Psoas muscle (tissue), 8 donors: ENCODE measurements at regions of chr15 and their contacts with region 1.

Region 1: DNA sequence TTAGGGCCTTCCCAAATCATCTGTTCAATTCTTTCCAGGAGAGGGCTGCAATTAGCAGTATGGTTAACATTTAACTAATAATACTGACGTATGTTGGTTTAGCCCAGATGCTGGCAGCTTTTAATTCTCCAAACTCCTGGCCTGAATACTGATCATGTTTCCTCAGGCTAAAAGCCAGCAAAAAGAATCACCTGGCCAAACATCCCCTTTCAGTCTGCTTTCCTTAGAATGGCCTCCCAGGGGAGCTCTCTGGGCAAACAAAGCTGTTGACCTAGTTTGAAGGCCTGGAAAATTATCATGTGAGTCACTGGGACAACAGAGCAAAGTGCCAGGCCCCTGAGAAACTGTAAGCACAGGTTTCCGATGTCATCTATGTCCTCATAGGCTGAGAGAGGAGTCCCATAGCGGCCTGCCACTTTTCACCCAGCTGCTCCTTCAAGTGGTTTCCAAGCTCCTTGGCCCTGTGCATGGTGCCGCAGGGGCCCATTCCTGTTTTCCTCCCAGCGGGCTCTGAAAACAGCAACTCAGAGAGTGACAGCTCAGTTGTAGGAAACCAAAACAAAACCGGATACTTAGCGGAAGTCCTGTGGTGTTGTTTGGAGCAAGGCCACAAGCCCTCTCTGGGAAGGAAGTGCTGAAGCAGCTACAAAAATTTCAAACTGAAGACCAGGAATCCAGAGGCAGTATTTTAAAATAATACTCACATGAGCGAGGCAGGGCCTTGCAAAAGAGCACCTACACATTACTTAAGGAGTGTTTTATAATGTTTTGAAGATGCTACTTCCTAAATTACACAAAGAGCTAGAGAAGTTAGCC is 36.5 kb upstream of the RAB11A start:
- DNase-seq: peak; percentile 85 to 95
- ATAC-seq: peak; percentile 95 to 98 (median 97)
- H3K4me3 ChIP-seq: peak overlapping the region; percentile 35
- H3K27ac ChIP-seq: peak overlapping the region; percentile 86
- H3K4me1 ChIP-seq: peaks cover 39% of the 10 kb centered on the region
- H3K27me3 ChIP-seq: no peaks in the 10 kb centered on the region
- CTCF ChIP-seq: peak; percentile 21

Region 2: GRCh38 chr15:65792130-65792987 is 40.4 kb before region 1 on chr15 and contains the start of gene DENND4A:
- intact Hi-C with region 1: loop called in 1 of 2 experiments (anchors 2 kb)
- DNase-seq: peak; percentile 98 to 99
- ATAC-seq: peak; percentile 94 to 97 (median 96)
- H3K4me3 ChIP-seq: peak within 1 kb of the TSS; percentile 90
- H3K27ac ChIP-seq: peak within 1 kb of the TSS; percentile 98
- H3K4me1 ChIP-seq: peaks cover 16% of the 10 kb centered on the region
- H3K27me3 ChIP-seq: no peaks in the 10 kb centered on the region
- CTCF ChIP-seq: no peak
- total RNA-seq, gene DENND4A: 15.4 to 46.7 (median 23.4) TPM

Region 3: DNA sequence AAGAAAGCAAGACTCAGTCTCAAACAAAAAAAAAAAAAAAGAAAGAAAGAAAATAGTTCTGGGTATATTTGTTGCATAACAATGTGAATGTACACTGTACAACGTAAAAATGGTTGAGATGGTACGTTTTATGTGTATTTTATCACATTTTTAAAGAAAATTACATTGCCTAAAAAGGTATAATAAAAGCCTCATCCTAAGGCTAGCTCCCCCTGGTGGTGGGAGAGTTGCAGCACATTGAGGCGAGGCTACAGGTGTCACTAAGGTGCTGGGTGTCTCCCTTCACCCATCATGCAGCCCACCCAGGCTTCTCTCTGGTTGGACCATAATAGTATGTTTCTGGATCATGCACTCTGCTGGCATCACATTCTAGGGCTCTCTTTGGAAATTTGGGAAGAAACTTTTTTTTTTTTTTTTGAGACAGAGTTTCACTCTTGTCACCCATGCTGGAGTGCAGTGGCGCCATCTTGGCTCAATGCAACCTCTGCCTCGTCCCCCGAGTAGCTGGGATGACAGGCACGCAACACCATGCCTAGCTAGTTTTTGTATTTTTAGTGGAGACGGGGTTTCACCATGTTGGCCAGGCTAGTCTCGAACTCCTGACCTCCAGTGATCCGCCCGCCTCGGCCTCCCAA is 24.2 kb after region 1 on chr15:
- intact Hi-C with region 1: loop called in 1 of 2 experiments (anchors 2 kb)
- DNase-seq: peak; percentile 56 to 68
- ATAC-seq: peak in 3 of 4 donors; percentile 54 to 69 (median 64)
- H3K4me3 ChIP-seq: no peak overlapping the region
- H3K27ac ChIP-seq: peak overlapping the region; percentile 89
- H3K4me1 ChIP-seq: peaks cover 16% of the 10 kb centered on the region
- H3K27me3 ChIP-seq: no peaks in the 10 kb centered on the region
- CTCF ChIP-seq: peak; percentile 64

Region 4: GRCh38 chr15:65869127-65869953 is 36.6 kb after region 1 on chr15 and contains the start of gene RAB11A:
- intact Hi-C with region 1: loop called (anchors 1 to 2 kb)
- DNase-seq: peak; percentile 96 to 99
- ATAC-seq: peak; percentile 98 to 100 (median 99)
- H3K4me3 ChIP-seq: peak within 1 kb of the TSS; percentile 98
- H3K27ac ChIP-seq: peak within 1 kb of the TSS; percentile 95
- H3K4me1 ChIP-seq: peaks cover 10% of the 10 kb centered on the region
- H3K27me3 ChIP-seq: no peaks in the 10 kb centered on the region
- CTCF ChIP-seq: peak; percentile 36
- total RNA-seq, gene RAB11A: 89.5 to 152 (median 105) TPM

Region 5: DNA sequence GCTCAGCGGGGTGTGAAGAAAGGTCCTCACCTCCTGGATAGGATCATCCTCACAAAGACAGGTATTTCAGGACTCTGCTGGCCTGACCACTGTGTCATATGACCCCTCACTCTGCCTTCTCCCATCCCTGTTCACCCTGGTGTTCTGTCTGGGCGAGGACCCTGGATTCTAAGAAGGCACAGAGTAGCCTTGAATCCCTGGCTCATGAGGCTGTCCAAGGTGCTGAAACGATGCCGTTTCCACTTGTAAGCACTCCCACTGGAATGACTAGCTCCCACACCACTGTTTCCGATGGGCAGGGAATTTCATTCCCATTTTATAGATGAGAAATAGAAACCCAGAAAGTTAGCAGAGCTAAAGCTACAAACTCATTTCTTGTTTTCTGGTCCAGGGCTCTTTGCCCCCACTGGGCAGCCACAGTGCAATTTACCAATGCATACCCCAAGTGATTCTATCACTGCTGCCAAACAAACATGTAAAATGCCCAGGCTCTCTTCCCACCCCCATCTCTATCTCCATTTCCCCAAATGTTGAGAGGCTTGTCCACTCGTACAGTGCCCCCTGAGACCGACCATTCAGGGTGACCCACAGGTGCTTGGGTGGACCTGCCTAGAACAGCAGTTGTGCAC is 119.8 kb after region 1 on chr15:
- intact Hi-C with region 1: no loop called
- DNase-seq: no peak
- ATAC-seq: no peak
- H3K4me3 ChIP-seq: no peak overlapping the region
- H3K27ac ChIP-seq: no peak overlapping the region
- H3K4me1 ChIP-seq: no peaks in the 10 kb centered on the region
- H3K27me3 ChIP-seq: no peaks in the 10 kb centered on the region
- CTCF ChIP-seq: no peak